Left colon (tissue), 2 donors: ENCODE measurements at regions of chr10 and their contacts with region 1.

Region 1: GRCh38 chr10:26881600-26882331 is 21.0 kb upstream of the ABI1 start:
- DNase-seq: no peak
- ATAC-seq: peak; percentile 82

Region 2: DNA sequence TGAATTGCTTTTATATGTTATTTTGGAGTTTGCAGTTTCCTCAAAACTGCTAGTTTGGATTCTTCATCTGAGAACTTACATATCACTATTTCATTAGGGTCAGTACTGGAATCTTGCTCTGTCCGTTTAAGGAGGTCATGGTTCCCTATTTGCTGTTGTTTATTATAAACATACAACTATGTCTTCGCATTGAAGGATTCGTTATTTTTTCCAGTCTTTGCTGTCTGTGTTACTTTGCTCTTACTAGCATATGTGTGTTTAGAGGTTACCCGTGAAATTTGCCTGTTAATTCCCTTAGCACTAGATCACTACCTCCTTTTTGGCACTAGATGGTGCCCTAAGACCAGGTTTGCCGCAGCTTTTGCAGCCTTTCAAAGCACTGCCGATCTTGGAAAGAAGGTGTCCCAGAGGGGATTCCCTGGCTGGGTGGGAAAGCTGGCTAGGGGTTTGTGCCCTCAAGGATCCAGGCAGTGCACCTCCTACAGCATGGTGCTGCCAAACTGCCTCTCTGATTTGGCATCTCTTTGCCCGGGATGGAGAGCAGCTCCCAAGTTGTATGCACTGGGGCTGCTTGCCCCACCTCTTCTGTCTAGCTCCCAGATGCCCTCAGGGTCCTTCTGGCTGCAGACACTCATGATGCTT is 546.7 kb before region 1 on chr10:
- intact Hi-C with region 1: loop called in 1 of 2 experiments (anchors 10 kb)
- DNase-seq: peak in 1 of 2 donors; percentile 39
- ATAC-seq: peak; percentile 71

Region 3: DNA sequence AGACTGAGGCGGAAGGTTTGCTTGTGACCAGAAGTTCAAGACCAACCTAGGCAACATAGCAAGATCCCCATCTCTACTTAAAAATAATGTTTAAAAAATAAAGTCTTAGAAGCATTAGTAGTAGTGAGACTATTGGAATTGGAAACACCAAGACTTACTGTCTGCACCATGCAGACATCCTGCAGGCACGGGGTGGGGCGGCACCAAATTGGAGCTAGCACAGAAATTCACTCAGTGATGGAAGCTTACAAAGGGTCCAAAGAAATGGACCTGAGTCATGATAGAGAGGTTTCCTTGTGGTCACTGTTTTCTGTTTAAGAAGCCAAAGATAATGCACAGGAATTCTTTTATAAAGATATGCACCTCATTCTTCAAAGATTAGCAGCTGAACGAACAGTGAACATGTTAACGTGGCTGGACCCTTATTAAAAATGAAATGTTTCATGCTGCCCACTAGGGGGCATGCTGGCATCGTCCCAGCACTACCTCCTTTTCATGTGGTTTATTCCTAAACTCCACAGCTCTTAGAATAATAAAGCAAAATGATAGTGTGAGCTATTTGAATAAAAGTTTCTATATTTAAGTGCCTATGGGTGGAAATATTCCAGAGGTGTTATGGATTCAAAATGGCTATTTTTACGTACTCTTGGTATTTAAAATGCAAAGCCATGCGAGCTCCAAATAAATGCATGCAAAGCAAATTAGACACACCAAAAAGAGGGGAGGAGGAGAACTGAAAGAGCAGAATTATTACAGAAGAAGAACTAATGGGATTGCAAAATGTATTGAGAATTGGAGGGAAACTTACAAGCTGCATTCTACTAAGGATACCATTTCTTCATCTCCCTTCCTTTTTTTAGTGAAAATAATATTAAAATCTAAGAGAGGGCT is 155.7 kb before region 1 on chr10:
- intact Hi-C with region 1: loop called (anchors 5 to 10 kb)
- DNase-seq: peak in 1 of 2 donors; percentile 40
- ATAC-seq: peak; percentile 77

Region 4: DNA sequence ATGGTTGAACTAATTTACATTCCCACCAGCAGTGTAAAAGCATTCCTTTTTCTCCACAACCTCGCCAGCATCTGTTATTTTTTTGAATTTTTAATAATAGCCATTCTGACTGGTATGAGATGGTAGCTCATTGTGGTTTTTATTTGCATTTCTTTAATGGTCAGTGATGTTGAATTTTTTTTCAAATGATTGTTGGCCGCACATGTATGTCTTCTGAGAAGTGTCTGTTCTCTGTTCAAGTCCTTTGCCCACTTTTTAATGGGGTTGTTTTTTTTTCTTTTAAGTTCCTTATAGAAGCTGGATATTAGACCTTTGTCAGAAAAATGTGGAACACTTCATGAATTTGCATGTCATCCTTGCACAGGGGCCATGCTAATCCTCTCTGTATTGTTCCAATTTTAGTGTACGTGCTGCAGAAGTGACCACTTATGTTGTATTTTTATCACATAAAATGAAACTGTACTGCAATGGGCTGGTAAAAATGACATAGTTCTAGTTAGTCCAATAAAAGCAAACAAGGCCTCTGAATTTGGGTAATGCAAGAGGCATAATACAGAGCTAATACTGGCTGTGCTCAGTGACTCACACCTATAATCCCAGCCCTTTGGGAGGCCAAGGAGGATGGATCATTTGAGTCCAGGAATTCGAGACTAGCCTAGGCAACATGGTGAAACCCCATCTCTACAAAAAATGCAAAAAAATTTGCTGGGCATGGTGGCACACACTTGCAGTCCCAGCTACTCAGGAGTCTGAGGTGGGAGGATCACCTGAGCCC is 91.4 kb before region 1 on chr10:
- intact Hi-C with region 1: no loop called
- DNase-seq: no peak
- ATAC-seq: no peak